HepG2 (cell line): ENCODE measurements at regions of chr11 and their contacts with region 1.

Region 1: DNA sequence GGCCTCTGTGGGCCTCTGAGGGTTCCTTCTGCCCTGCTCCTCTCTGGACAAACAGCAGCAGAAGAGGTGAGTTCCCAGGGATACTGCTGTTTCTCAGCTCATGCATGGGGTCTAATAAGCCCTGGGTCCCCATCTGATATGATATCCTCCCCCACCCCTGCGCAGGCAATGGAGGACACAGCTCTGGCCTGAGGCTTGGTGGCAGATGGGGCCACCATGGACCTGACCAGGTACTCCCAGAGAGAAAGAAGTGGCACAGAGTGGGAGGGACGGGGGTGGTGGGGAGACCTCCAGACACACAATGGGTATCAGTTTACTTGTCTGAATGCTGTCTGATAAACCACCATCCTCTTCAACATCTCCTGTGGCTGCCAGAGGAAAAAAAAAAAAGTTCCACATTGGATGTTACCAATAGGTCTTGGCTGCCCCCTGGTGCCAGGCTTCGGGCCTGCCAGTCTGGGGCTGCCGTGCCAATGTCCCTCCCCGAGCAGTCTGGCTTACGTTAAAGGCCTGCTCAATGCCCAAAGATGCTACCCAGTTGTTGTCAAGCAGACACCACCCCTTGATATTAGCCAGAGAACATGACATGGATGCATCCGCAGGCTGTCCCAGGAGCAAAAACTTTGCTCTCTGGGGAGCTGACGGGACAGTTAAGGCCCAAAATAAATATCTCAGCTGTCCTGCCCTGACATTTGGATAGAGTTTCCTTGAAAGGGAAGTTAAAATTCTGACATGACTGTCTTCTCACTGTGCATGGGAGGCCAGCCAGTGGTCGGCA is 27.9 kb upstream of the ABCC8 start:
- DNase-seq: peak; percentile 45
- ATAC-seq: peak; percentile 83
- H3K4me3 ChIP-seq: no peak overlapping the region
- H3K27ac ChIP-seq: no peak overlapping the region
- H3K4me1 ChIP-seq: no peaks in the 10 kb centered on the region
- H3K27me3 ChIP-seq: peaks cover 1 to 8% of the 10 kb centered on the region in 2 experiments; a peak in 2 of 5 replicates
- CTCF ChIP-seq: peak; percentile 87
- EP300 ChIP-seq: no peak
- POLR2A ChIP-seq: no peak
- RAD21 ChIP-seq: peak; percentile 76

Region 2: GRCh38 chr11:17230867-17231851 is 273.4 kb before region 1 on chr11:
- CTCF ChIA-PET with region 1: interaction called, 3 read pairs
- POLR2A ChIA-PET with region 1: no interaction called
- in situ Hi-C with region 1: loop called (anchors 25 kb)
- intact Hi-C with region 1: loop called (anchors 10 kb)
- DNase-seq: no peak
- ATAC-seq: no peak
- H3K4me3 ChIP-seq: no peak overlapping the region
- H3K27ac ChIP-seq: no peak overlapping the region
- H3K4me1 ChIP-seq: 0 out of 2 replicates have a peak, but pooled peaks cover 5% of the 10 kb centered on the region
- H3K27me3 ChIP-seq: no peaks in the 10 kb centered on the region
- CTCF ChIP-seq: no peak
- EP300 ChIP-seq: no peak
- POLR2A ChIP-seq: no peak
- RAD21 ChIP-seq: no peak

Region 3: DNA sequence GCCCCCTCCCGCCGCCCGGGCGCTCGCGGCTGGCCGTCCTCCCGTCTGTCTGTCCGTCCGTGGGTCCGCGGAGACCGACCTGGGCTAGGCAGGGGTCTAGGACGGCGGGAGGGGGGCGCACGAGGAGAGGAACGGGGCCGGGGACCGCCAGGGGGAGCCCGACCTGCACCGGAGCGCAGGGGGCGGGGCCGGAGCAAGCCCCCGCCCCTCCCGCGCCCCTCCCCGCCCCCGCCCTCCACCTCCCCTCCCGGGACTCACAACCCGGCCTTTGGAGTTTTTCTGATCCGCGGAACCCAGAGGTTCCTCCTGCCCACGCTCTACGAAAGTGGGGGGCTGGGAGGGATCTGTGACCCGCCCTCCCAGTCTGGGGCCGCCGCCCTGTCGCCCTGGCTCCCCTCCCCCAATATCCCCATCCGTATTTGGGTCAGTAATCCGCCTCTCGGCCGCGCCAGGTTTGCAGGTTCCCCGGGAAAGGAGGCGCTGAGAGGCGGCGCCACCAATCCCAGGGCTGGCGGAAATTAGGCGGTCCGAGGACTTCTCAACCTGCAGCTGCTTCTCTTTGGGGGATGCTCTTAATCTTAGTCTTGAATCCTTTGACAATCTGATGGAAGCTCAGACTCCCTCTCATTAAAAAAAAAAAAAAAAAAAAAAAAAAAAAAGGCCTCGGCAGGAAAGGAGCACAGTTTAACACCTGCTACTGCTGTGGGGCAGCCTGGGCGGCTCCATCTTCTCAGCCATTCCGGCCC is 115.1 kb before region 1 on chr11:
- CTCF ChIA-PET with region 1: interaction called, 34 read pairs
- POLR2A ChIA-PET with region 1: interaction called, 3 read pairs
- in situ Hi-C with region 1: loop called (anchors 5 kb)
- intact Hi-C with region 1: loop called (anchors 1 kb)
- DNase-seq: peak; percentile 66
- ATAC-seq: peak; percentile 41
- H3K4me3 ChIP-seq: peak overlapping the region; percentile 62 to 71 (median 71); a peak in 5 of 6 replicates
- H3K27ac ChIP-seq: no peak overlapping the region
- H3K4me1 ChIP-seq: 0 out of 2 replicates have a peak, but pooled peaks cover 5% of the 10 kb centered on the region
- H3K27me3 ChIP-seq: peaks cover 0 to 18% of the 10 kb centered on the region in 2 experiments; a peak in 3 of 5 replicates
- CTCF ChIP-seq: peak; percentile 72
- EP300 ChIP-seq: no peak
- POLR2A ChIP-seq: no peak
- RAD21 ChIP-seq: no peak

Region 4: DNA sequence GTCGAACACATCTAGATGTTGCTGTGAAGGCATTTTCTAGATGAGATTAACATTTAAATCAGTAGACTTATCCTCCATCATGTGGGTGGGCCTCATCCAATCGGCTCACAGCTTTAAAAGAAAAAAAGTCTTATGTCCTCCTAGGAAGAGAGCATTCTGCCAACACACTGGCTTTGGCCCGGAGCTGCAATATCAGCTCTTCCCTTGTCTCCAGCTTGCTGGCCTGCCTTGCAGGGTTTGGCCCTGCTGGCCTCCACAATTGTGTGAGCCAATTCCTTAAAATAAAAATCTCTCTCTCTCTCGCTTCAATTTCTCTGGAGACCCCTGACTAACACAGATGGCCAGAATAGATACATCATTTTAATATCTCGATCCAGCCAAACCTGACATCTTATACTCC is 14.8 kb before region 1 on chr11:
- CTCF ChIA-PET with region 1: no interaction called
- POLR2A ChIA-PET with region 1: no interaction called
- in situ Hi-C with region 1: no loop called
- intact Hi-C with region 1: no loop called
- DNase-seq: no peak
- ATAC-seq: no peak
- H3K4me3 ChIP-seq: no peak overlapping the region
- H3K27ac ChIP-seq: no peak overlapping the region
- H3K4me1 ChIP-seq: peaks cover 11% of the 10 kb centered on the region
- H3K27me3 ChIP-seq: peaks cover 1 to 37% of the 10 kb centered on the region in 2 experiments; a peak in 3 of 5 replicates
- CTCF ChIP-seq: no peak
- EP300 ChIP-seq: no peak
- POLR2A ChIP-seq: no peak
- RAD21 ChIP-seq: no peak